Activated CD4-positive, alpha-beta memory T cell treated with anti-CD3 and anti-CD28 coated beads for 36 hours (primary cell): ENCODE measurements at regions of chr16 and their contacts with region 1.

Region 1: DNA sequence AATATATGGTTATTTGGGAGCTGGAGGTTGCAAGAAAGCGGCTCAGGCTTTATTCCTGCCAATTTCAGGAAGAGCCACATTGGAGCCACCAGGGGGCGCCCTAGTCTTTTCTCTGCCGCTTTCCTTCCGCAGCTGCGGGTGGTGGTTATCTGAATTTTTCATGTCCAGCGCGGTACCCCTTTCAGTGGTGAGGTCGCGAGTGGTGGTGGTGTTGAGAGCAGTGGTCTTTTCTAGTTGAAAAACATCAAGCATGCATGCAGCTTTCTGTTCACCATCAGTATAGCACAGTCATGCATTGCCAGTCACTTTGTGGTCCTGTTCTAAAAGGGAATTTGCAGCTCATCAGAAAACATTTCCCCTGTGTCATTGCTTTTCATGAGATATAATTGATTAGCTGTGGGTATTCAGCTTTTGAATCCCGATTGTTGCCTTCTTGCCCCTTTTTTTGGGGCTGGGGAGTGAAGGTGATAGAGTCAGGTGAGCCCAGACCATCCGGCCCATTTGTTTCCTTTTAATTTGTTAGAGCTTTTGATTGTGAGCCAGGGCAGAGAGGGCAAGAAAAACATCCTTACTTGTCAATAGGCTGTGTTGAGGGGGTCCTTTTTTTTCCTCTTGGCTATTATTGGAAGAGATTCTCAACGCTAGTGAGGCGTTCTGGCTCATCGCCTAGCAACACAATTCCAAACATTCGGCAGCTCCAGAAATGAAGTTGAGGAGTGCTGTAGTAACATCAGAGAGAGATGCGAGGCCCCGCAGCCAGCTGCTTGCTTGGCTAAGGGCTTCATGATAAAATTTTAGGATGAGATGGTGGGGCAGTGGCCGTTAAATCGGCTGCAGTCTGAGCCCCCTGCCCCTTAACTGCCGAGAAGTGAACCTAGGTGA is 119.0 kb downstream of the SNX29 start:
- DNase-seq: peak; percentile 74
- H3K4me3 Mint-ChIP-seq: peak overlapping the region; percentile 28
- H3K27ac Mint-ChIP-seq: no peak overlapping the region
- H3K4me1 Mint-ChIP-seq: peaks cover 4% of the 10 kb centered on the region
- H3K27me3 Mint-ChIP-seq: no peaks in the 10 kb centered on the region

Region 2: GRCh38 chr16:12067714-12068401 is 27.7 kb before region 1 on chr16:
- CTCF ChIA-PET with region 1: interaction called, 19 read pairs
- POLR2A ChIA-PET with region 1: no interaction called
- intact Hi-C with region 1: no loop called
- DNase-seq: peak; percentile 74
- H3K4me3 Mint-ChIP-seq: no peak overlapping the region
- H3K27ac Mint-ChIP-seq: no peak overlapping the region
- H3K4me1 Mint-ChIP-seq: no peaks in the 10 kb centered on the region
- H3K27me3 Mint-ChIP-seq: no peaks in the 10 kb centered on the region

Region 3: DNA sequence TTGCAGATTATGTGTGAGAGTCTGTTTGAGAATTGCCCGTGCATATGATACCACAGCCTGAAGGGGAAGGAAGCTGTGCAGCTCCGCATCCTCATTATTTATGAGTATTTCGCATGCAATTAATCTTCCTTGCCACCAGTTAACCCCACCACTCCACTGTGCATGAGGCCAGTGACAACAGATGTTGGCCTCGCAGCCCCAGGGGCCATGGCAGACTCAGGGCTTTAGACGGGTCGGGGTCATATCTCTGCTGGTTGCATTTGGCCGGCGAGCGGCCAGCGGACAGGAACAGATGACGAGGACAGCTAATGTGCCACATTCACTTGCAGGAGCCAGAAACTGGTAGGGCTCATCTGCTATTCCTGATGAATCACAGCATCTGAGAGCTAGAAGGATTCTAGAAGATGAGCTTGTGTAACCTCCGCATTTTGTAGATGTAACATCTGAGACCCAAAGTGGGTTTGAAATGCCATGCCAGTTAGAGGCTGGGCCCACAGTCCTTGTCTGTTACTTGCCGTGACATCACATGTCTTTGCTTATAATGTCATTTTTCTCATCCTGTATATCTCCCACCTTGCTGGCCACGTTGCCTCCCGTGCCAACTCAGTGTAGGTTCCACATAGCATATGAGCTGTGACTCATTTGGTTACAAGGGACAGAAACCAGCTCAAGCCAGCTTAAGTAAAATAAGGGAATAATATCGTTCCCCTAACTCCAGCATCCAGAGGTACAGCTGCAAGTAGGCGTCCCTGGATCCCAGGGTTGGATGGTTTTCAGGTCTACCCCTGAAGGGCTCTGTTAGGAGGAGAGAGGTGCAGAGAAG is 18.2 kb after region 1 on chr16:
- CTCF ChIA-PET with region 1: interaction called, 12 read pairs
- POLR2A ChIA-PET with region 1: no interaction called
- intact Hi-C with region 1: no loop called
- DNase-seq: no peak
- H3K4me3 Mint-ChIP-seq: no peak overlapping the region
- H3K27ac Mint-ChIP-seq: no peak overlapping the region
- H3K4me1 Mint-ChIP-seq: no peaks in the 10 kb centered on the region
- H3K27me3 Mint-ChIP-seq: no peaks in the 10 kb centered on the region

Region 4: GRCh38 chr16:12455287-12455798 is 359.8 kb after region 1 on chr16:
- CTCF ChIA-PET with region 1: interaction called, 10 read pairs
- POLR2A ChIA-PET with region 1: no interaction called
- intact Hi-C with region 1: no loop called
- DNase-seq: peak; percentile 67
- H3K4me3 Mint-ChIP-seq: no peak overlapping the region
- H3K27ac Mint-ChIP-seq: no peak overlapping the region
- H3K4me1 Mint-ChIP-seq: peaks cover 16% of the 10 kb centered on the region
- H3K27me3 Mint-ChIP-seq: no peaks in the 10 kb centered on the region

Region 5: GRCh38 chr16:12515746-12516145 is 420.2 kb after region 1 on chr16:
- CTCF ChIA-PET with region 1: no interaction called
- POLR2A ChIA-PET with region 1: no interaction called
- intact Hi-C with region 1: no loop called
- DNase-seq: no peak
- H3K4me3 Mint-ChIP-seq: no peak overlapping the region
- H3K27ac Mint-ChIP-seq: no peak overlapping the region
- H3K4me1 Mint-ChIP-seq: no peaks in the 10 kb centered on the region
- H3K27me3 Mint-ChIP-seq: no peaks in the 10 kb centered on the region

Region 6: GRCh38 chr16:12819126-12820117 is 723.9 kb after region 1 on chr16:
- CTCF ChIA-PET with region 1: interaction called, 4 read pairs
- POLR2A ChIA-PET with region 1: no interaction called
- intact Hi-C with region 1: loop called (anchors 2 kb)
- DNase-seq: peak; percentile 88
- H3K4me3 Mint-ChIP-seq: no peak overlapping the region
- H3K27ac Mint-ChIP-seq: no peak overlapping the region
- H3K4me1 Mint-ChIP-seq: peaks cover 4% of the 10 kb centered on the region
- H3K27me3 Mint-ChIP-seq: no peaks in the 10 kb centered on the region

Region 7: GRCh38 chr16:13453938-13454553 is 1358.5 kb after region 1 on chr16:
- CTCF ChIA-PET with region 1: interaction called, 15 read pairs
- POLR2A ChIA-PET with region 1: no interaction called
- intact Hi-C with region 1: loop called (anchors 5 kb)
- DNase-seq: peak; percentile 12
- H3K4me3 Mint-ChIP-seq: no peak overlapping the region
- H3K27ac Mint-ChIP-seq: no peak overlapping the region
- H3K4me1 Mint-ChIP-seq: no peaks in the 10 kb centered on the region
- H3K27me3 Mint-ChIP-seq: no peaks in the 10 kb centered on the region